Mammary epithelial cell (primary cell): ENCODE measurements at regions of chr16 and their contacts with region 1.

Region 1: GRCh38 chr16:29995911-29996772 is at the start of gene INO80E:
- DNase-seq: peak; percentile 94
- H3K4me3 ChIP-seq: peak within 1 kb of the TSS; percentile 72 to 96 (median 86)
- H3K27ac ChIP-seq: peak within 1 kb of the TSS; percentile 91
- H3K4me1 ChIP-seq: peaks cover 23% of the 10 kb centered on the region
- H3K27me3 ChIP-seq: no peaks in the 10 kb centered on the region
- CTCF ChIP-seq: no peak
- total RNA-seq, gene INO80E: 27.7 to 62.2 TPM

Region 2: DNA sequence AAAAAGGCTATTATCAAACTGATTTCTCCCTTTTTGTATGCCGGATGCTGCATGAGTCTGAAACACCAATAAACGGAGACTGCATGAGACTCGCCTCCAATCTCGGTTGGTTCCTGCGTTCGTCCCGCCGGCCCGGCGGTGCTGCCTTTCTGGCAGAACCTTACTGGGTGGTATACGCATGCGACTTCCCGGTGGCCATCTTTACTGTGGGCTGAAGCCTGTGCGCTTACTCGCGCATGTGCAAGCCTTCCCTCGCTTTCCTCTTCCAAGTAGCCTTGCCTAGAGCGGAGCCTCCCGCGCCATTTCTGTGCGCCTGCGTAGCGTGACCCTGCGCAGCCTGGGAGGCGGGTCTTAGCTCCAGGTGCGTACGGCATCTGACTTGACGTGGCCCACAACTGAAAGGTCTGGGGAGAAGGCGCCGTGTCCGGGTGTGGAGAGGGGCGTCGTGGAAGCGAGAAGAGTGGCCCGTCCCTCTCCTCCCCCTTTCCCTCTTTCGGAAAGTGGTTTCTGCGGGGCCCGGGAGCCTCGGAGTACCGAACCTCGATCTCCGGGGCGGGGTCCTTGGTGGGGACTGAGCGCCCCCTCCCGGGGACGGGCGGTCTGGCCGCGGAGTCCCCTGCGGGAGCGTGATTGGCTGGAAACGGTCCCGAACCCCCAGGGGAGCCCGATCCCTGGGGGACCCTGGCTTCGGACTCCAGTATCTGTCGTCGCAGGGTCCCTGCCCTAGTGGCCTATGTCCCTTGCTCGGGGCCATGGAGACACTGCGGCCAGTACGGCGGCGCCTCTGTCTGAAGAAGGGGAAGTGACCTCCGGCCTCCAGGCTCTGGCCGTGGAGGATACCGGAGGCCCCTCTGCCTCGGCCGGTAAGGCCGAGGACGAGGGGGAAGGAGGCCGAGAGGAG is 180.1 kb before region 1 on chr16 and contains the start of gene PAGR1:
- CTCF ChIA-PET with region 1: no interaction called
- dilution Hi-C with region 1: no loop called
- in situ Hi-C with region 1: loop called in 1 of 2 experiments (anchors 25 kb)
- intact Hi-C with region 1: loop called (anchors 5 kb)
- DNase-seq: peak; percentile 99
- H3K4me3 ChIP-seq: peak within 1 kb of the TSS; percentile 67 to 81 (median 69)
- H3K27ac ChIP-seq: peak within 1 kb of the TSS; percentile 70
- H3K4me1 ChIP-seq: peaks cover 37% of the 10 kb centered on the region
- H3K27me3 ChIP-seq: no peaks in the 10 kb centered on the region
- CTCF ChIP-seq: peak; percentile 64 to 96
- total RNA-seq, gene PAGR1: 13.7 to 24.9 TPM

Region 3: DNA sequence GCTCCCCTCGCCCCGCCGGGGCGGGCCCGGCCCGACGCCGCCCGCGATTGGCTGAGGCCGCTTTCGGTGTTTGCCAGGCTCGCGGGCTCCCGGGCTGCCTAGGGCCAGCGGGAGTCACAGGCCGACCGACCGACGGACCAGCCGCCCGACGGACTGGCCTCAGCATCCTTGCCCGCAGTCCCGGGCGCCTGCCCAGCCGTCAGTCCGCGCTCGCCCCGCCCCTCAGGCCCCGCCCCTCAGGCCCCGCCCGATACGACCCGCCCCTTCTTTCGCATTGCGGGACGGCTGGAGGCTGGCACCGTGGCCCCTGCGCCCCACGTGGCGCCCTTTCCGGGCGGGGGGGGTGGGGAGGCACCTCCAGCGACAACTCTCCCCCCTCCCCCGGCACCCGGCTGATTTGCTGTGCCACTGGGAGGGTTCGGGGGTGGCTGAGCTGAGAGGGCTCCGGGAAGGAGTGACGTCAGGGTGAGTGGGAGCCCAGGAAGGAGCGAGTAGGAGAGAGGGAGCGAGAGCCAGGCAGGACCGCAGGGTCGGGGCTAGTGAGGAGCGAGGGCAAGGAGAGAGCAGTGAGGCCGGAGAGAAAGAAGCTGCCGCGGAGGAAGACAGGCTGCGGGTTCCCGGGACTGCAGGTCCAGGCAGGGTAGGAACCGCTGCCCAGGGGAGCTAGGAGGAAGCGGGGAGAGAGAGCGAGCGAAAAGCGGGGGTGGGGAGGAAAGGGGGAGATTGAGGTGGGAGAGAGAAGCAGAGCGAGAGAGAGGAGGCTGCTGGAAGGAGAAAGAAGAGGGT is 95.8 kb before region 1 on chr16 and contains the start of gene ASPHD1:
- CTCF ChIA-PET with region 1: no interaction called
- dilution Hi-C with region 1: no loop called
- in situ Hi-C with region 1: no loop called
- intact Hi-C with region 1: loop called (anchors 5 kb)
- DNase-seq: peak; percentile 84
- H3K4me3 ChIP-seq: peak within 1 kb of the TSS; percentile 61 to 70 (median 68)
- H3K27ac ChIP-seq: no peak within 1 kb of the TSS
- H3K4me1 ChIP-seq: peaks cover 21% of the 10 kb centered on the region
- H3K27me3 ChIP-seq: peaks cover 4% of the 10 kb centered on the region
- CTCF ChIP-seq: no peak
- total RNA-seq, gene ASPHD1: 1.5 to 14.7 TPM

Region 4: DNA sequence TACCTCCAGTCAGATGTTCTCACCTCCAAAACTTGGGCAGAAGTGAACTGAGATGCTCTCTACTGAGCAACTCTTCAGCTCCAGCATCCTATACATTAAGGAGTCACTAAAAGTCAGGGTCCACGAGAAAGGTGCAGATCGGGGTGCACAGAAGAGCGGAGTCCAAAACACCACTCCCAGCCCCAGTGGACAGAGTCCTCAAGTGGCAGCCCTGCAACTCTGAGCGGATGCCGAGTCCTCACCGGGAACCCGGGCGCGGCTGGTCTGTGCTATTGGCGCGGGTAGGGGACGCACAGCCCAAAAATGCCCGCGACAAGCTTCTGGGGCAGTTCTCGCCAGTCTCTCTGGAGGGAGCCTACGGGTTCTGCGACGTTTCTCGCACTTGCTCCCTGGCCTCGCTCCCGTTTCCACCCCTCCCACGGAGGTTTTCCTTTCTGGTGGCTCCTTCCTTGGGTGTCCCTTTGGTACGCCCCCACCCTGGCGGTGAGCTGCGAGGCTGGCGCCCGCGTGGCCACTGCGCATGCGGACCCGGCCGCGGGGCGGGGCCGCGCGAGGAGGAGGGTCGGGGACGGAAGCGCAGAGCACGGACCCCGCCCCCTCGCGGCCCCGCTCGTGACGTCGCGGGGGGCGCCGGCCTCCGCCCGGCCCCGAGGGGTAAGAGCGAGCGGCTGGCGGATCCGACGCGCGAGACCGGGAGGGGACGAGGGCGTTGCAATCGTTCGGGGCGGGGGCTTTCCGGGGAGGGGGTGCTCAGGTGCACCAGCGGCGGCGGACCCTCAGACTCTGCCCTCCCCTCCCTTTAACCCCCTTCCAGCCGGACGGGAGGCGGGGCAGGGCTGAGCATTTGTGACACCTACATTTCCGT is 34.4 kb before region 1 on chr16 and contains the start of gene TMEM219:
- CTCF ChIA-PET with region 1: no interaction called
- dilution Hi-C with region 1: no loop called
- in situ Hi-C with region 1: no loop called
- intact Hi-C with region 1: loop called (anchors 1 kb)
- DNase-seq: peak; percentile 76
- H3K4me3 ChIP-seq: peak within 1 kb of the TSS; percentile 67 to 78 (median 73)
- H3K27ac ChIP-seq: peak within 1 kb of the TSS; percentile 50
- H3K4me1 ChIP-seq: peaks cover 17% of the 10 kb centered on the region
- H3K27me3 ChIP-seq: no peaks in the 10 kb centered on the region
- CTCF ChIP-seq: peak; percentile 8 to 47
- total RNA-seq, gene TMEM219: 65.6 to 65.7 TPM

Region 5: DNA sequence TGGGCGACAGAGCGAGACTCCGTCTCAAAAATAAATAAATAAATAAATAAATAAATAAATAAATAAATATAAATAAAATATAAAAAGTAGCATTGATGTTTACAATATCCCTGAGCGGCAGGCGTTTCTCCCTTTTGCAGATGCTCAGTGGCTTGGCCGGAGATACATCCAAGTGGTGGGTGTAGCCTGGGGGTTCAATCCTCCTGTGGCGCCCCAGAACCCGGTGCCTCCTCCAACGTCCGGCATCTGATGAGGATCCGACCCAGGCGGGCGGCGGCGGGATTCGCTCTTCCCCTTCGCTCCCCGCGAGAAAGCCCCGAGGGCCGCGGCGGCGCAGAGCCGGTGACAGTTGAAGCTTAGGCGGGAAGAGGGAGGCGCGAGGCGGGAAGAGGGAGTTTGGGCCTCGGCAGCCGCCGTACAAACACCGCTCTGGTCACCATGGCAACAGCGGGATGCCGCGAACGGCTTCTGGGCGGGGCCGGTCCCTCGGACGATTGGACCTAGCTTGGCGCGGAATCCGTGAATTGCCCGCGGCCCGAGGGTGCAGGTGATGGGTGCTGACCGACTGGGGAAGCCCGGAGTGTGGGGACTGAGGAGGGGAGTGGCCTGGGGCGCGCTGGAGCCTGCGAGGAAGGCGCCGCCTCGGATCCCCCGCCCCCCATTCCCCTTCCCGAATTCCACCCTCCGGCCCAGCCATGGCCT is 56.7 kb after region 1 on chr16:
- CTCF ChIA-PET with region 1: no interaction called
- dilution Hi-C with region 1: loop called (anchors 5 kb)
- in situ Hi-C with region 1: no loop called
- intact Hi-C with region 1: no loop called
- DNase-seq: peak; percentile 90
- H3K4me3 ChIP-seq: peak overlapping the region; percentile 77 to 90 (median 89)
- H3K27ac ChIP-seq: peak overlapping the region; percentile 78
- H3K4me1 ChIP-seq: peaks cover 22% of the 10 kb centered on the region
- H3K27me3 ChIP-seq: no peaks in the 10 kb centered on the region
- CTCF ChIP-seq: no peak